A549 (cell line): ENCODE measurements at regions of chr1 and their contacts with region 1.

Region 1: DNA sequence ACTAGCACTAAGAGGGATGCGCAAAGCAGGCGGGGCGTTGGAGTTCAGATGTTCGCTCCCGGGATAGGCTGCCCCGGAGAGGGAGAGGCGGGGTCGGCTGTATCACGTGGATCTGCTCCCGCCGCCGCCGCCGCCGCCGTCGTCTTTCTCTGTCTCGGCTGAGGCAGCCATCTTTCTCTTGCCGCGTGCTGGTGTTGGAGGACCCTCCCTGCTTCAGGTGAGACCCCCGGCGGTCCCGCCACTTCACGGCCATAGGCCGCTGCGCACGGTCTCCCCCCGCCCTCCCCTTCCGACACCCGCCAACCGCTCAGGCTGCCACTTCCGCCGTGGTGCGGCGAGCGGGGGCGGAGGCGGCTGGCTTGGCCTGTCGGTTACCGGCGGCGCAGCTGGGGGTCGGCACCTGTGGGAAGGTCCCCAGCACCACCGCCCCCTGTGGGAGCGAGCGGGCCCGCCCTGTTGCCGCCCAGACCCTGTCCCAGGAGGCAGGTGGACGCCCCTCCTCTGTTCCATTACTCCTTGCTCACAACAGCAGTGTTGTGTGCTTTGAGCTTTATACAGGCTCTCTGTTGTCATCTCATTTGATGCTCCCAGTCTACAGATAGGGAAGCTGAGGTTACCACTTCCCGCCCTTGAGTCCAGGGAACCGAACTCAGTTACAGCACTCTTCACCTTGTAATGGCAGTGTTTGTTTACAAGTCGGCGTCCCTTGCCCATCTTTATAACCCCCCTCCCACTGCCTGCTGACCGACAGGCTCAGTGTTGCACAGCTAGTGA is at the start of gene BTF3L4:
- DNase-seq: peak; percentile 76 to 92
- ATAC-seq: peak; percentile 93 to 97
- H3K4me3 ChIP-seq: peak within 1 kb of the TSS; percentile 85
- H3K27ac ChIP-seq: peak within 1 kb of the TSS; percentile 99 to 100
- H3K4me1 ChIP-seq: peaks cover 28% of the 10 kb centered on the region
- CTCF ChIP-seq: no peak
- EP300 ChIP-seq: no peak
- POLR2A ChIP-seq: peak; percentile 35
- RAD21 ChIP-seq: no peak
- polyA plus RNA-seq, gene BTF3L4: 47.7 and 63.8 TPM in 2 replicates

Region 2: DNA sequence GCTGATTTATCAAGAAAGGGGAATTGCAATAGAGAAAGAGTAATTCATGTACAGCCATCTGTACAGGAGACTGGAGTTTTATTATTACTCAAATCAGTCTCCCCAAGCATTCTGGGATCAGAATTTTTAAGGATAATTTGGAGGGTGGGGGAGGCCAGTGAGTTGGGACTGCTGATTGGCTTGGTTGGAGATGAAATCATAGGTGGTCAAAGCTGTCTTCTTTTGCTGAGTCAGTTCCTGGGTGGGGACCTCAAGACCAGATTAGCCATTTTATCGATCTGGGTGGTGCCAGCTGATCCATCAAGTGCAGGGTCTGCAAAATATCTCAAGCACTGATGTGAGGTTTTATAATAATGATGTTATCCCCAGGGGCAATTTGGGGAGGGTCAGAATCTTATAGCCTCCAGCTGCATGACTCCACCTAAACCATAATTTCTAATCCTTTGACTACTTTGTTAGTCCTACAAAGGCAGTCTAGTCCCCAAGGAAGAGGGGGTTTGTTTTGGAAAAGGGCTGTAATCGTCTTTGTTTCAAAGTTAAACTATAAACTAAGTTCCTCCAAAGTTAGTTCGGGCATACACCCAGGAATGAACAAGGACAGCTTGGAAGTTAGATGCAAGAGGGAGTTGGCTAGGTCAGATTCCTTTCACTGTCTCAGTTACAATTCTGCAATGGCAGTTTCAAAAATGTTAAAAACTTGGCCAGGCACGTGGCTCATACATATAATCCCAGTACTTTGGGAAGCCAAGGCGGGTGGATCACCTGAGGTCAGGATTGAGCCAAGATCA is 48.9 kb before region 1 on chr1:
- CTCF ChIA-PET with region 1: no interaction called
- POLR2A ChIA-PET with region 1: no interaction called
- DNase-seq: peak in 1 of 2 experiments; percentile 63
- ATAC-seq: peak; percentile 47 to 68; a peak in 4 of 6 replicates
- H3K4me3 ChIP-seq: no peak overlapping the region
- H3K27ac ChIP-seq: peak overlapping the region; percentile 79 to 95
- H3K4me1 ChIP-seq: peaks cover 30% of the 10 kb centered on the region
- CTCF ChIP-seq: no peak
- EP300 ChIP-seq: no peak
- POLR2A ChIP-seq: no peak
- RAD21 ChIP-seq: no peak

Region 3: GRCh38 chr1:52033190-52034049 is 22.9 kb before region 1 on chr1 and contains the start of gene KTI12:
- CTCF ChIA-PET with region 1: no interaction called
- POLR2A ChIA-PET with region 1: interaction called, 13 read pairs
- DNase-seq: peak; percentile 78 to 87
- ATAC-seq: peak; percentile 94 to 95
- H3K4me3 ChIP-seq: peak within 1 kb of the TSS; percentile 95
- H3K27ac ChIP-seq: peak within 1 kb of the TSS; percentile 91 to 99
- H3K4me1 ChIP-seq: peaks cover 46% of the 10 kb centered on the region
- CTCF ChIP-seq: no peak
- EP300 ChIP-seq: no peak
- POLR2A ChIP-seq: peak; percentile 71
- RAD21 ChIP-seq: no peak
- polyA plus RNA-seq, gene KTI12: 12.0 TPM in 2 replicates

Region 4: GRCh38 chr1:52268372-52268771 is 212.0 kb after region 1 on chr1:
- CTCF ChIA-PET with region 1: no interaction called
- POLR2A ChIA-PET with region 1: no interaction called
- DNase-seq: no peak
- ATAC-seq: no peak
- H3K4me3 ChIP-seq: no peak overlapping the region
- H3K27ac ChIP-seq: no peak overlapping the region
- H3K4me1 ChIP-seq: no peaks in the 10 kb centered on the region
- CTCF ChIP-seq: no peak
- EP300 ChIP-seq: no peak
- POLR2A ChIP-seq: no peak
- RAD21 ChIP-seq: no peak